Transverse colon (tissue), 4 donors: ENCODE measurements at regions of chr6 and their contacts with region 1.

Region 1: GRCh38 chr6:70343313-70343712 is 40.4 kb upstream of the COL9A1 start:
- DNase-seq: no peak
- H3K4me3 ChIP-seq: no peak overlapping the region
- H3K27ac ChIP-seq: no peak overlapping the region
- H3K4me1 ChIP-seq: no peaks in the 10 kb centered on the region
- H3K27me3 ChIP-seq: no peaks in the 10 kb centered on the region
- CTCF ChIP-seq: no peak
- EP300 ChIP-seq: no peak
- POLR2A ChIP-seq: no peak

Region 2: GRCh38 chr6:68852791-68853190 is 1490.5 kb before region 1 on chr6:
- in situ Hi-C with region 1: no loop called
- intact Hi-C with region 1: loop called (anchors 5 kb)
- DNase-seq: no peak
- H3K4me3 ChIP-seq: no peak overlapping the region
- H3K27ac ChIP-seq: no peak overlapping the region
- H3K4me1 ChIP-seq: no peaks in the 10 kb centered on the region
- H3K27me3 ChIP-seq: no peaks in the 10 kb centered on the region
- CTCF ChIP-seq: no peak
- EP300 ChIP-seq: no peak
- POLR2A ChIP-seq: no peak

Region 3: GRCh38 chr6:70421509-70421908 is 78.2 kb after region 1 on chr6:
- in situ Hi-C with region 1: no loop called
- intact Hi-C with region 1: no loop called
- DNase-seq: no peak
- H3K4me3 ChIP-seq: no peak overlapping the region
- H3K27ac ChIP-seq: no peak overlapping the region
- H3K4me1 ChIP-seq: peaks cover 0 to 10% (median 4%) of the 10 kb centered on the region in 4 donors
- H3K27me3 ChIP-seq: no peaks in the 10 kb centered on the region
- CTCF ChIP-seq: no peak
- EP300 ChIP-seq: no peak
- POLR2A ChIP-seq: no peak